ENCODE measurements at regions of chr2 and their contacts with region 1.

Region 1: DNA sequence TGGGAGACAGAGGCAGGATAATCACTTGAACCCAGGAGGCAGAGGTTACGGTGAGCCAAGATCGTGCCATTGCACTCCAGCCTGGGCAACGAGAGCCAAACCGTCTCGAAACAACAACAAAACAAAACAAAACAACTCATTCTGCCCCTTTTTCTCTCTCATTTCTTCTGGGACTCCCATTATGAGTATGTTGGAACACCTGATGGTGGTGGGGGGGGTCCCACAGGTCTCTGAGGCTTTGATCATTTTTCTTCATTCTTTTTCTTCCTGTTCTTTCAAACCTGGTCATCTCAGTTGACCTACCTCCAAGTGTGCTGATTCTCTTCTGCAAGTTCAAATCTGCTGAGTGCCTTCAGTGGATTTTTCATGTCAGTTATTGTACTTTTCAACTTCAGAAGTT is 8.2 kb upstream of the FAM161A start:
- DNase-seq: no peak
- ATAC-seq: no peak
- H3K4me3 Mint-ChIP-seq: no peak overlapping the region
- H3K27ac Mint-ChIP-seq: no peak overlapping the region
- H3K4me1 Mint-ChIP-seq: peaks cover 3% of the 10 kb centered on the region
- H3K27me3 Mint-ChIP-seq: no peaks in the 10 kb centered on the region
- CTCF ChIP-seq: no peak

Region 2: GRCh38 chr2:61888267-61889055 is 26.4 kb after region 1 on chr2 and contains the start of gene CCT4:
- CTCF ChIA-PET with region 1: no interaction called
- POLR2A ChIA-PET with region 1: interaction called, 14 read pairs
- intact Hi-C with region 1: no loop called
- DNase-seq: peak; percentile 90
- ATAC-seq: peak; percentile 88
- H3K4me3 Mint-ChIP-seq: peak within 1 kb of the TSS; percentile 99
- H3K27ac Mint-ChIP-seq: peak within 1 kb of the TSS; percentile 99
- H3K4me1 Mint-ChIP-seq: peaks cover 31% of the 10 kb centered on the region
- H3K27me3 Mint-ChIP-seq: no peaks in the 10 kb centered on the region
- CTCF ChIP-seq: no peak
- total RNA-seq, gene CCT4: 388 to 390 TPM

Region 3: DNA sequence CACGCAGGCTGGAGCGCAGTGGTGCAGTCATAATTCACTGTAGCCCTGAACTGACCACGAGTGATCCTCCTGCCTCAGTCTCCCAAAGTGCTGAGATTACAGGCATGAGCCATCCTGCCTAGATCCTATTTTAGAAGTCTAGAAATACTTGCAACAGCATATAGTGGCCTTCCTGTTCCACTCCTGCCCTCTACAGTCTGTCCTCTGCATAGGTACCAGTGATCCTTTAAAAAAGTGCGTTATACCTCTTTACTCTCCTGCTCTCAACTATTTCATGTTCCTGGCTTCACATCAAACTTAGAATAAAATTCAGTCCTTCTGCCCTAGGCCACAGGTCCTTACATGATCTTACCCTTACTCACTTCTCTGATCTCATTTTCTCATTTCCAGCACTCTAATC is 49.4 kb after region 1 on chr2:
- CTCF ChIA-PET with region 1: no interaction called
- POLR2A ChIA-PET with region 1: no interaction called
- intact Hi-C with region 1: no loop called
- DNase-seq: peak; percentile 22
- ATAC-seq: peak; percentile 56
- H3K4me3 Mint-ChIP-seq: no peak overlapping the region
- H3K27ac Mint-ChIP-seq: no peak overlapping the region
- H3K4me1 Mint-ChIP-seq: peaks cover 10% of the 10 kb centered on the region
- H3K27me3 Mint-ChIP-seq: no peaks in the 10 kb centered on the region
- CTCF ChIP-seq: no peak

Measured in activated CD8-positive, alpha-beta T cell treated with anti-CD3 and anti-CD28 coated beads for 36 hours (primary cell).